ENCODE measurements at regions of chr4 and their contacts with region 1.

Region 1: GRCh38 chr4:143773998-143774895 is 73.8 kb upstream of the FREM3 start:
- DNase-seq: peak; percentile 50 to 88 (median 71)
- ATAC-seq: peak; percentile 99
- H3K4me3 ChIP-seq: no peak overlapping the region
- H3K27ac ChIP-seq: no peak overlapping the region; the same call in 2 of the 3 replicates
- H3K4me1 ChIP-seq: peaks cover 3 to 7% of the 10 kb centered on the region in 2 experiments; a peak in 3 of 5 replicates
- H3K27me3 ChIP-seq: no peaks in the 10 kb centered on the region
- CTCF ChIP-seq: peak; percentile 94
- EP300 ChIP-seq: peak; percentile 60
- POLR2A ChIP-seq: no peak
- RAD21 ChIP-seq: peak; percentile 96 to 98

Region 2: GRCh38 chr4:143679434-143679833 is 94.8 kb before region 1 on chr4:
- CTCF ChIA-PET with region 1: no interaction called
- POLR2A ChIA-PET with region 1: no interaction called
- in situ Hi-C with region 1: no loop called
- intact Hi-C with region 1: no loop called
- DNase-seq: no peak
- ATAC-seq: no peak
- H3K4me3 ChIP-seq: no peak overlapping the region
- H3K27ac ChIP-seq: no peak overlapping the region
- H3K4me1 ChIP-seq: no peaks in the 10 kb centered on the region
- H3K27me3 ChIP-seq: peaks cover 7 to 17% of the 10 kb centered on the region in 2 experiments; a peak in 3 of 5 replicates
- CTCF ChIP-seq: no peak
- EP300 ChIP-seq: no peak
- POLR2A ChIP-seq: no peak
- RAD21 ChIP-seq: no peak

Region 3: DNA sequence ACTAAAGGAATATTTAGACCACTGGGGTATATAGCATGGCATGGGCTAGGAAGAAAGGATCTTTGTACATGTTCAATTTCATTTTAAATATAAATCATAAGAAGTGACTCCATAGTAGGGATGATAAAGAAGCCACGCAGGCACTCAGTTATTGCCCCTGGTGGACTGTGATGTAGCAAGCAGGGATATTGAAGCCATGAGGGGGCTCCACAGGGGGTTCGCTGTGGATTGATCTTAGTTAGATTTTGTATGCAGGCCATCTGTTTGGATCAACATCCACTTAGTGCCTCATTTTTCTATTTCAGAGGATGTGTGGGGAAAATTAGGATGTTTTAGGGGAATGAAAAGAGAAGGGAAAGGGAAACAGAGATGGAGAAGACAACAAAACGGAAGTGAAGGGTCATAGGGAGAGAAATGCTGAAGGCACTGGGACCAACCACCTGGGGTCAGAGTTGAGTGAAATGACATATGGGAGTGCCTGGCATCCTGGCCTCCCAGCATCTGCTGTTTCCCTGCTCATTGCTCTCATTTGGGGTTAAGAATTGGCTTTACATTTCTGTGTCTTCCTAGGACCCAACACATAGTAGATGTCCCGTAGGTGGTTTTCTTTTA is 62.6 kb before region 1 on chr4:
- CTCF ChIA-PET with region 1: no interaction called
- POLR2A ChIA-PET with region 1: no interaction called
- in situ Hi-C with region 1: no loop called
- intact Hi-C with region 1: no loop called
- DNase-seq: peak in 2 of 4 experiments; percentile 37
- ATAC-seq: peak; percentile 93
- H3K4me3 ChIP-seq: no peak overlapping the region
- H3K27ac ChIP-seq: no peak overlapping the region
- H3K4me1 ChIP-seq: no peaks in the 10 kb centered on the region
- H3K27me3 ChIP-seq: no peaks in the 10 kb centered on the region
- CTCF ChIP-seq: peak; percentile 41 to 50 (median 42)
- EP300 ChIP-seq: no peak
- POLR2A ChIP-seq: no peak
- RAD21 ChIP-seq: peak in 1 of 2 experiments; percentile 43; a peak in 2 of 4 replicates

Region 4: DNA sequence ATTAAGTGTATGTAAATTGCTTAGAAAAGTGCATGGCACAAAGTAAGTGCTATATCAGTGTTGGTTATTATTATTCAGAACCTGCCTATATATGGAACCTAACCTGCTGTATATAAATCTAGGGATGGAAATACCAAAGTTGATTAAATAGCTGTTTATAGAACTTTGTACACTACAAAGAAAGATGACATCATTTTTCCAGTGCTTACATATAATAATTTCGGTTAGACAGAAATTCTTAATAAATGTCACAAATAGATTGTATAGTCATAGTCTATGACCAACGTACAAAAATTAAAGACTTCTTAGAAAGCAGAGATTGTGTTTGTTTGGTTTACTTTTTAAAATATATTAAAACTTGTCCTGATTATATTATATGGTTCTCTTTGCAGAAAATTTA is 240.6 kb after region 1 on chr4:
- CTCF ChIA-PET with region 1: no interaction called
- POLR2A ChIA-PET with region 1: no interaction called
- in situ Hi-C with region 1: loop called (anchors 10 kb)
- intact Hi-C with region 1: no loop called
- DNase-seq: no peak
- ATAC-seq: no peak
- H3K4me3 ChIP-seq: no peak overlapping the region
- H3K27ac ChIP-seq: no peak overlapping the region
- H3K4me1 ChIP-seq: no peaks in the 10 kb centered on the region; a peak in 1 of 5 replicates
- H3K27me3 ChIP-seq: no peaks in the 10 kb centered on the region
- CTCF ChIP-seq: no peak
- EP300 ChIP-seq: no peak
- POLR2A ChIP-seq: no peak
- RAD21 ChIP-seq: no peak